ENCODE measurements at regions of chr3 and their contacts with region 1.

Region 1: DNA sequence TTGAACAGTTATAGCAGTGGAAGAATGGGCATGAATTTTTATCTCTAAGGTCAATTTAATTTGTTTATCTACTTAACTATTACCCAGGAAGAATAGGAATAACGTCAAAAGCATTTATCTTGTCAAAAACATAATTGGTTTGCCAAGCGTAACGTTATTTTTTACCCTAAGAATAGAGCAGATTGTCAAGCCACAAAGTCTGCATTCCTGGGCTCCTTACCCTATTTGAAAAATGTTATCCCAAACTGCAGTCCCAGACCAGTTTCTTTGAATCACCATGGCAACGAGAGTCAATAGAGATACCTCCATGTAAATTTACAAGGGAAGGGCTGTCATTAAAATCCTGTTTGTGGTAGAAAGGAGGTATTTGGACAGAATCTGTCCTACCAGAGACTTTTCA is 61.1 kb downstream of the CPNE4 start:
- DNase-seq: no peak
- H3K4me3 ChIP-seq: no peak overlapping the region
- H3K27ac ChIP-seq: no peak overlapping the region
- H3K4me1 ChIP-seq: no peaks in the 10 kb centered on the region
- H3K27me3 ChIP-seq: no peaks in the 10 kb centered on the region
- CTCF ChIP-seq: no peak
- EP300 ChIP-seq: no peak
- POLR2A ChIP-seq: no peak

Region 2: DNA sequence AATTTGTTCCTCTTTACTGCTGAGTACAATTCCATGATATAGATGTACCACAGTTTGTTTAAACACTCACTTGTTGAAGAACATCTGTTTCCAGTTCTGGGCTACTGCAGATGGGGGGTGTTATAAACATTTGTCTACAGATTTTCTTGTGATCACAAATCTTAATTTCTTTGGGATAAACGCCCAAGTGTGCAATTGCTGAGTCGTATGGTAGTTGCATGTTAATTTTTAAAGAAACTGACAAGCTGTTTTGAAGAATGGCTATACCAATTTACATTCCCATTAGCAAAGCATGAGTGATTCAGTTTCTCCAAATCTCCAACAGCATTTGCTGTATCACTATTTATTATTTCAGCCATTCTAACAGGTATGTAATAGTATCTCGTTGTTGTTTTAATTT is 229.0 kb before region 1 on chr3:
- intact Hi-C with region 1: loop called in 1 of 4 experiments (anchors 10 kb)
- DNase-seq: no peak
- H3K4me3 ChIP-seq: no peak overlapping the region
- H3K27ac ChIP-seq: no peak overlapping the region
- H3K4me1 ChIP-seq: no peaks in the 10 kb centered on the region
- H3K27me3 ChIP-seq: no peaks in the 10 kb centered on the region
- CTCF ChIP-seq: no peak
- EP300 ChIP-seq: no peak
- POLR2A ChIP-seq: no peak

Region 3: GRCh38 chr3:131962982-131963381 is 10.7 kb before region 1 on chr3:
- intact Hi-C with region 1: loop called in 1 of 4 experiments (anchors 2 kb)
- DNase-seq: no peak
- H3K4me3 ChIP-seq: no peak overlapping the region
- H3K27ac ChIP-seq: no peak overlapping the region
- H3K4me1 ChIP-seq: no peaks in the 10 kb centered on the region
- H3K27me3 ChIP-seq: no peaks in the 10 kb centered on the region
- CTCF ChIP-seq: no peak
- EP300 ChIP-seq: no peak
- POLR2A ChIP-seq: no peak

Measured in ovary (tissue), 10 donors.